ENCODE measurements at regions of chr14 and their contacts with region 1.

Region 1: GRCh38 chr14:38867561-38868150 is 235.4 kb downstream of the SEC23A start:
- DNase-seq: peak; percentile 60 to 75 (median 72)
- ATAC-seq: peak; percentile 61 to 90 (median 86)
- H3K4me3 ChIP-seq: no peak overlapping the region
- H3K27ac ChIP-seq: no peak overlapping the region
- H3K4me1 ChIP-seq: peaks cover 0 to 24% (median 0%) of the 10 kb centered on the region in 12 donors
- H3K27me3 ChIP-seq: no peaks in the 10 kb centered on the region
- CTCF ChIP-seq: peak; percentile 68 to 91 (median 82)
- POLR2A ChIP-seq: no peak

Region 2: GRCh38 chr14:37985826-37986470 is 881.7 kb before region 1 on chr14:
- intact Hi-C with region 1: loop called in 1 of 10 experiments (anchors 5 kb)
- DNase-seq: peak in 3 of 5 donors; percentile 13 to 24 (median 21)
- ATAC-seq: no peak
- H3K4me3 ChIP-seq: no peak overlapping the region
- H3K27ac ChIP-seq: no peak overlapping the region
- H3K4me1 ChIP-seq: no peaks in the 10 kb centered on the region
- H3K27me3 ChIP-seq: no peaks in the 10 kb centered on the region
- CTCF ChIP-seq: peak; percentile 53 to 77 (median 68)
- POLR2A ChIP-seq: no peak

Region 3: GRCh38 chr14:38605193-38606114 is 262.2 kb before region 1 on chr14:
- intact Hi-C with region 1: loop called in 1 of 10 experiments (anchors 5 kb)
- DNase-seq: no peak
- ATAC-seq: no peak
- H3K4me3 ChIP-seq: no peak overlapping the region
- H3K27ac ChIP-seq: no peak overlapping the region
- H3K4me1 ChIP-seq: no peaks in the 10 kb centered on the region
- H3K27me3 ChIP-seq: no peaks in the 10 kb centered on the region
- CTCF ChIP-seq: no peak
- POLR2A ChIP-seq: no peak

Region 4: GRCh38 chr14:38721822-38722431 is 145.7 kb before region 1 on chr14:
- intact Hi-C with region 1: loop called in 9 of 10 experiments (anchors 1 to 5 kb)
- DNase-seq: peak in 3 of 5 donors; percentile 33 to 45 (median 39)
- ATAC-seq: peak; percentile 61 to 81 (median 70)
- H3K4me3 ChIP-seq: no peak overlapping the region
- H3K27ac ChIP-seq: no peak overlapping the region
- H3K4me1 ChIP-seq: peaks cover 0 to 9% (median 0%) of the 10 kb centered on the region in 12 donors
- H3K27me3 ChIP-seq: no peaks in the 10 kb centered on the region
- CTCF ChIP-seq: peak; percentile 59 to 81 (median 66)
- POLR2A ChIP-seq: no peak

Region 5: DNA sequence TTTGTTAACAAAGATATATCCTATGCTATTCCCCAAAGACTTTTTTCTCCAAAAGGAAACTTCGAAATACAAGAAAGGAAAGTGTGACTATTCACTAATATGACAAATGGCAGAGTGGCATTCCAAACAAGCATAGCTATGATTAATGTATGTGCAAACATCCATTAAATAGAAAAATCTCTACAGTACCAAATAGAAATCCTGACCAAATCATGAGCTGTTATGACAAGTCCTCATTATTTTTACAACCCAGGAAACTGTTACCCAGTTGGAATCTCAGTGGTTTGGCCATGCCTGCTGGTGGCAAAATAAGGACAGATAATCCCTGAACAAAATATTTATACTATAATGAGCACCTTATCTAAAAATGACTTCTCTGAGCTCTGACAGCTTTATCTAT is 33.2 kb after region 1 on chr14:
- intact Hi-C with region 1: no loop called
- DNase-seq: no peak
- ATAC-seq: no peak
- H3K4me3 ChIP-seq: no peak overlapping the region
- H3K27ac ChIP-seq: no peak overlapping the region
- H3K4me1 ChIP-seq: no peaks in the 10 kb centered on the region
- H3K27me3 ChIP-seq: no peaks in the 10 kb centered on the region
- CTCF ChIP-seq: no peak
- POLR2A ChIP-seq: no peak

Region 6: DNA sequence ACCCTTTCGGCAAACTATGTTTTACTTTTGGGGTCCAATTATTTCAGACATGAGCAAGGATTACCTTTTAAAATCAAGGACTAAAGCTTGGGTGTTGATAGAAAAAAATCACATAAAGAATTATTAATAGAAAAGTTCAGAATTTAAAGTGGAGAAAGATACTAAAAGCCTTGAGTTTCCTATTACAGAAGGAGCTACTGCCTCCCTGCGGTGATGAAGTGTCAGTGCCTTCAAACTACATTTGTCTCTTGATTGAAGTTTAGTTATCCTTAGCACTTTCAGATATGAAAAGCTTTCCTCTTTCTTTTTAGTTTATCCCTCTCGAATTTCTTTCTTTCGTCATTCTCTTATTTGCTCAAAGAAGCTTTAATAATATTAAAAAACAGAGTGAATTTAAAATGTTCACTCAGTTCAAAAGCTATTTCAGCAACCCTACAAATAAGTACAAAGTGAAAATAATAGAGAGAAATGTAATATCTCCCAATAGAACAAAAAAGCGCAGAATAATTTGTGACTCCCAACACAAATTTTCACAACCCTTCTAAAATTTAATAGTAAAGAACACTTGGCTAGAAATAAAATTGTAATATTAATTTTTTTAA is 147.8 kb after region 1 on chr14:
- intact Hi-C with region 1: loop called in 7 of 10 experiments (anchors 2 to 10 kb)
- DNase-seq: peak in 1 of 5 donors; percentile 16
- ATAC-seq: no peak
- H3K4me3 ChIP-seq: no peak overlapping the region
- H3K27ac ChIP-seq: no peak overlapping the region
- H3K4me1 ChIP-seq: peaks cover 0 to 4% (median 0%) of the 10 kb centered on the region in 12 donors
- H3K27me3 ChIP-seq: no peaks in the 10 kb centered on the region
- CTCF ChIP-seq: peak; percentile 67 to 92 (median 80)
- POLR2A ChIP-seq: no peak

Measured in heart left ventricle (tissue), 16 donors.